ENCODE measurements at regions of chr10 and their contacts with region 1.

Region 1: GRCh38 chr10:127715782-127716378 is 21.1 kb upstream of the FOXI2 start:
- DNase-seq: no peak
- ATAC-seq: no peak
- H3K4me3 ChIP-seq: no peak overlapping the region
- H3K27ac ChIP-seq: no peak overlapping the region
- H3K4me1 ChIP-seq: no peaks in the 10 kb centered on the region
- H3K27me3 ChIP-seq: no peaks in the 10 kb centered on the region
- CTCF ChIP-seq: peak in 1 of 4 donors; percentile 22

Region 2: GRCh38 chr10:127853868-127854768 is 138.2 kb after region 1 on chr10:
- intact Hi-C with region 1: loop called in 1 of 3 experiments (anchors 10 kb)
- DNase-seq: peak; percentile 35 to 88 (median 65)
- ATAC-seq: peak; percentile 67 to 98 (median 94)
- H3K4me3 ChIP-seq: no peak overlapping the region
- H3K27ac ChIP-seq: no peak overlapping the region
- H3K4me1 ChIP-seq: no peaks in the 10 kb centered on the region
- H3K27me3 ChIP-seq: no peaks in the 10 kb centered on the region
- CTCF ChIP-seq: peak; percentile 53 to 75 (median 60)

Region 3: GRCh38 chr10:128011175-128011979 is 295.5 kb after region 1 on chr10:
- intact Hi-C with region 1: loop called in 1 of 3 experiments (anchors 10 kb)
- DNase-seq: peak; percentile 57 to 95 (median 84)
- ATAC-seq: peak; percentile 84 to 98 (median 94)
- H3K4me3 ChIP-seq: no peak overlapping the region
- H3K27ac ChIP-seq: no peak overlapping the region
- H3K4me1 ChIP-seq: peaks cover 0 to 4% (median 0%) of the 10 kb centered on the region in 3 donors
- H3K27me3 ChIP-seq: no peaks in the 10 kb centered on the region
- CTCF ChIP-seq: peak; percentile 97 to 99 (median 97)

Region 4: GRCh38 chr10:128069351-128070051 is 353.6 kb after region 1 on chr10:
- intact Hi-C with region 1: loop called in 1 of 3 experiments (anchors 5 kb)
- DNase-seq: peak in 5 of 6 donors; percentile 52 to 88 (median 74)
- ATAC-seq: peak; percentile 70 to 88 (median 78)
- H3K4me3 ChIP-seq: no peak overlapping the region
- H3K27ac ChIP-seq: no peak overlapping the region
- H3K4me1 ChIP-seq: no peaks in the 10 kb centered on the region
- H3K27me3 ChIP-seq: no peaks in the 10 kb centered on the region
- CTCF ChIP-seq: peak; percentile 76 to 81 (median 80)